T-cell (primary cell): ENCODE measurements at regions of chr4 and their contacts with region 1.

Region 1: GRCh38 chr4:88211473-88212252 is 53.2 kb upstream of the ABCG2 start:
- DNase-seq: peak in 24 of 35 experiments; percentile 6 to 75 (median 27)
- ATAC-seq: peak in 3 of 4 experiments; percentile 37 to 66 (median 62)
- H3K4me3 ChIP-seq: no peak overlapping the region
- H3K4me3 Mint-ChIP-seq: no peak overlapping the region
- H3K27ac ChIP-seq: no peak overlapping the region
- H3K27ac Mint-ChIP-seq: no peak overlapping the region
- H3K4me1 ChIP-seq: no peaks in the 10 kb centered on the region
- H3K4me1 Mint-ChIP-seq: peaks cover 0 to 3% (median 0%) of the 10 kb centered on the region in 3 donors
- H3K27me3 ChIP-seq: no peaks in the 10 kb centered on the region
- H3K27me3 Mint-ChIP-seq: peaks cover 0 to under 1% of the 10 kb centered on the region in 2 donors

Region 2: GRCh38 chr4:88033309-88033708 is 178.4 kb before region 1 on chr4:
- CTCF ChIA-PET with region 1: interaction called, 14 to 59 read pairs
- POLR2A ChIA-PET with region 1: interaction called in 1 of 2 experiments, 13 read pairs
- DNase-seq: peak in 19 of 35 experiments; percentile 4 to 70 (median 15)
- ATAC-seq: peak in 2 of 4 experiments; percentile 38
- H3K4me3 ChIP-seq: no peak overlapping the region
- H3K4me3 Mint-ChIP-seq: no peak overlapping the region
- H3K27ac ChIP-seq: no peak overlapping the region
- H3K27ac Mint-ChIP-seq: no peak overlapping the region
- H3K4me1 ChIP-seq: no peaks in the 10 kb centered on the region
- H3K4me1 Mint-ChIP-seq: no peaks in the 10 kb centered on the region
- H3K27me3 ChIP-seq: no peaks in the 10 kb centered on the region
- H3K27me3 Mint-ChIP-seq: no peaks in the 10 kb centered on the region

Region 3: DNA sequence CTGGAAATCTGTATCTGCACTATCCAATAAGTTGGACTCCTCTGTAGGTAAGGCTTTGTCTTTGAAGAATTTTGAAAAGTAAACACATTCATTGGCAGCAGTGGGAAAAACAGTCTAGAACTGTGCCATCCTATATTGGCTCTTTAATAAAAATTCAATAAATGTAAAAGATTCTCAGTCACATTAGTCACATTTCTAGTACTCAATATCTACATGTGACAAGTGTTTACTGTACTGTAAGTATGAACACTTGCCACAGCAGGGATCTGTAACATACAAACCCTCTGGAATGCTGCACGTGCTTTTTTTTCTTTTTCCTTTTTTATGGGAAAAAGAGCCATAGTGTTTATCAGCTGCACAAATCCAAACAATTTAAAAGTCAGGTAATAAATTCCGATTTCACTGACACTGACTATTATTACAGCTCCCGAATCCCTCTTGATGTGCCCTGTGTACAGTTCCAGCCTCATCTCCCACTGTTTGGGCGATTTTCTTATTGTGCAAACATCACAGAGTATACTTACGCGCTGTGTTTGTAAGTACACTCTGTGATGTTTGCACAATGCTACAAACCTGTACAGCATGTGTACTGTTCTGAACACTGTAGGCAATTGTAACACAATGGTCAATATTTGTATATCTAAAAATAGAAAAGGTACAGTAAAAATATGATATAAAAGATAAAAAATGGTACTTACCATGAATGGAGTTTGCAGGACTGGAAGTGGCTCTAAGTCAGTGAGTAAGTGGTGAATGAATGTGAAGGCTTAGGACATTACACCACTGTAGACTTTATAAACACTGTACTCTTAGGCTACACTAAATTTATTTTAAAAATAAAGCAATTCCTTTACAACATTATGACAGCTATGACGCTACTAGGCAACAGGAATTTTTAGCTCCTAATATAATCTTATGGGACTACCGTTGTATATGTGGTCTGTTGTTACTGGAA is 303.2 kb after region 1 on chr4:
- CTCF ChIA-PET with region 1: interaction called, 10 to 110 read pairs
- POLR2A ChIA-PET with region 1: no interaction called
- DNase-seq: no peak
- ATAC-seq: no peak
- H3K4me3 ChIP-seq: no peak overlapping the region
- H3K4me3 Mint-ChIP-seq: no peak overlapping the region
- H3K27ac ChIP-seq: no peak overlapping the region
- H3K27ac Mint-ChIP-seq: no peak overlapping the region
- H3K4me1 ChIP-seq: no peaks in the 10 kb centered on the region
- H3K4me1 Mint-ChIP-seq: no peaks in the 10 kb centered on the region
- H3K27me3 ChIP-seq: no peaks in the 10 kb centered on the region
- H3K27me3 Mint-ChIP-seq: no peaks in the 10 kb centered on the region

Region 4: GRCh38 chr4:89661490-89661889 is 1449.8 kb after region 1 on chr4:
- CTCF ChIA-PET with region 1: no interaction called
- POLR2A ChIA-PET with region 1: interaction called in 1 of 2 experiments, 12 read pairs
- DNase-seq: no peak
- ATAC-seq: no peak
- H3K4me3 ChIP-seq: no peak overlapping the region
- H3K4me3 Mint-ChIP-seq: no peak overlapping the region
- H3K27ac ChIP-seq: no peak overlapping the region
- H3K27ac Mint-ChIP-seq: no peak overlapping the region
- H3K4me1 ChIP-seq: no peaks in the 10 kb centered on the region
- H3K4me1 Mint-ChIP-seq: no peaks in the 10 kb centered on the region
- H3K27me3 ChIP-seq: no peaks in the 10 kb centered on the region
- H3K27me3 Mint-ChIP-seq: peaks cover 0 to 5% of the 10 kb centered on the region in 2 donors